ENCODE measurements at regions of chr11 and their contacts with region 1.

Region 1: GRCh38 chr11:77047007-77047927 is 13.1 kb downstream of the B3GNT6 start:
- DNase-seq: peak; percentile 99
- ATAC-seq: peak; percentile 82
- H3K4me3 ChIP-seq: peak overlapping the region; percentile 71
- H3K27ac ChIP-seq: no peak overlapping the region
- H3K4me1 ChIP-seq: peaks cover 16% of the 10 kb centered on the region; the same call in 1 of the 2 replicates
- H3K27me3 ChIP-seq: no peaks in the 10 kb centered on the region
- CTCF ChIP-seq: peak; percentile 76

Region 2: DNA sequence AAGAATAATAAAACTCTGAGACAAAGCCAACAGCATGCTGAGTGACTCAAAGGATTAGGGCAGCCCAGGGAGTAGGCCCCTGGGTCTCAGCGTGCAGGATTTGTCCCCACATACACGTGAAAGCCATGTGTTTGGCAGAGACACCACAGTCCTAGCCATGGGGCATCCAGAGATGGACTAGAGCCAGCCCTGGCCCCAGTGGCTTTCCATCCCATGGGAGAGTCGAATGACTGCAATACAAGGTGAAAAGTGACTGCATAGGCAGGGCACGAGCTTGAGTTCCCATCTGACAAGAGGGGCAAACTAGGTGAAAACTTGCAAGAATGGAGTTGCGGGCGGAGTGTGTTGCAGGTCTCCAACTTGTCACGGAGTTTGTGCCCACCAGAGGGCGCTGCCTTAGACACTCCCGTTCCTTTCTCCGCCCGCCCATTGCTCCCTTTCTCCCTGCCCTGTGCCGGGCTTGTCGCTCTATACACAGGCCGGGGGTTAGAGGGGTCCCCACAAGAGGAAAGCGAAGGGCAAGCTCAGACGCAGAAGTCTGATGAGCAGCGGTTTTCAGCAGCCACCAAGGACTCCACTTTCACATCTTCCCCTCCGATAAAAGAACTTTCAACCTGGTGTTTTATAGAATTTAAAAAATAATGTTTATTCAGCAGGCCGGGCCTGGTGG is 239.9 kb before region 1 on chr11:
- CTCF ChIA-PET with region 1: no interaction called
- POLR2A ChIA-PET with region 1: no interaction called
- intact Hi-C with region 1: loop called (anchors 1 kb)
- DNase-seq: peak; percentile 88
- ATAC-seq: peak; percentile 91
- H3K4me3 ChIP-seq: 0 out of 2 replicates have a peak overlapping the region, but pooled peaks have one; percentile 25
- H3K27ac ChIP-seq: no peak overlapping the region
- H3K4me1 ChIP-seq: no peaks in the 10 kb centered on the region
- H3K27me3 ChIP-seq: no peaks in the 10 kb centered on the region
- CTCF ChIP-seq: peak; percentile 92

Region 3: DNA sequence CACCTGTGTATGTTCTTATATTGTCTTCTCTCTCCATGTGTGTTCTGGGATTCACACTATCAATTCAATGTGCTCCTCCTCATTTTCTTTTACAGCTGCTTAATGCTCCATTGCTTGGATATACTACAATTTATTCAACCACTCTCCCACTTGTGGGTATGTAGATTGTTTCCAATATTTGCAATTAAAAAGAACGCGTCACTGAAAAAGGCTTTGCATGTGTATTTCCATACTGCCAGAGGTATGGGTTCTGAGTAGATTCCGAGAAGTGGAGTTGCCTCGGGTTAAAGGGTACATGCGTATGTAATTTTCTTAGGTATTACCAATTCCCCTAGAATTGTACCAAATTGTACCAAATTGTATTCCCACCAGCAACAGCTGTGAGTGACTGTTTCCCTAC is 12.5 kb after region 1 on chr11:
- CTCF ChIA-PET with region 1: interaction called, 4 read pairs
- POLR2A ChIA-PET with region 1: no interaction called
- intact Hi-C with region 1: loop called (anchors 2 kb)
- DNase-seq: no peak
- ATAC-seq: no peak
- H3K4me3 ChIP-seq: no peak overlapping the region
- H3K27ac ChIP-seq: no peak overlapping the region
- H3K4me1 ChIP-seq: no peaks in the 10 kb centered on the region; the same call in 1 of the 2 replicates
- H3K27me3 ChIP-seq: no peaks in the 10 kb centered on the region
- CTCF ChIP-seq: no peak

Region 4: DNA sequence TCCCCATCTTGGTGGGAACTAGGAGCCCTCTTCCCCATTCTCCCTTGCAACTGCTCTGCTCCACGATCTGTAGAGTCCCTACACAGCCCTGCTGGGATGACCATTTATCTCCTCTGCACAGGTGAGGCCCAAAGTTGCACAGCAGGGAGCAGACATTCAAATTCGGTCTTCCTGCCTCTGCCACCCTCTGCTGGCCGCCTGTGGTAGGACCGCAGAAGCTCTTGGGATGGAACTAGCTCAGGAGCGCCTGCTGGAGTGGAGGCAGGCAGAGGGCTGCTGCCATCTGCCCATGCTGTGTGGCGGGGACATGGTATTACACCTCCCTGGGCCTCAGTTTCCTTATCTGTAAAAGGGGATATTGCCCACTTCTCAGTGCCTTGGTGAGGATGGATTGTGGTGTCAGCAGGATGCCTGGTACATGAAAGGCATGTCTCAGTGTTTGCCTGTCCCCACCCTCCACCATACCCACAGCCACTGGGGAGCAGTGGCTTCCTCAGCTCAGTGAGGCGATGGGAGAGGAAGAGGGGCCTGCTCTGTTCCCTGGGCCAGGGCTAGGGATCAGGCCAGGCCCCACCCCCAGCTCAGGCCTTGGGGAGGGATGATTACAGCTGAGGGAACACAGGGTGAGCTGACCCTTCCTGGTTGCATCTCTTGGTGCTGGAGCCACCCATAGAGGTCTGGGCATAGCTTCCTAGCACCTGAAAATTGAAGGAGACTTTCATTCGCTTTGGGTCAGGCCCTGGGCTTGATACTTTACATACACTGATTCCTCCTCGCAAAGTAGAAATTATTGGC is 44.1 kb after region 1 on chr11:
- CTCF ChIA-PET with region 1: interaction called, 137 read pairs
- POLR2A ChIA-PET with region 1: interaction called, 9 read pairs
- intact Hi-C with region 1: loop called (anchors 1 kb)
- DNase-seq: peak; percentile 93
- ATAC-seq: peak; percentile 93
- H3K4me3 ChIP-seq: no peak overlapping the region
- H3K27ac ChIP-seq: no peak overlapping the region
- H3K4me1 ChIP-seq: peaks cover 23% of the 10 kb centered on the region
- H3K27me3 ChIP-seq: no peaks in the 10 kb centered on the region
- CTCF ChIP-seq: peak; percentile 98

Region 5: GRCh38 chr11:77187776-77188632 is 140.7 kb after region 1 on chr11:
- CTCF ChIA-PET with region 1: no interaction called
- POLR2A ChIA-PET with region 1: no interaction called
- intact Hi-C with region 1: loop called (anchors 1 kb)
- DNase-seq: peak; percentile 88
- ATAC-seq: peak; percentile 68
- H3K4me3 ChIP-seq: no peak overlapping the region
- H3K27ac ChIP-seq: no peak overlapping the region
- H3K4me1 ChIP-seq: peaks cover 8% of the 10 kb centered on the region; the same call in 1 of the 2 replicates
- H3K27me3 ChIP-seq: peaks cover 20% of the 10 kb centered on the region
- CTCF ChIP-seq: peak; percentile 98